ENCODE measurements at regions of chr10 and their contacts with region 1.

Region 1: DNA sequence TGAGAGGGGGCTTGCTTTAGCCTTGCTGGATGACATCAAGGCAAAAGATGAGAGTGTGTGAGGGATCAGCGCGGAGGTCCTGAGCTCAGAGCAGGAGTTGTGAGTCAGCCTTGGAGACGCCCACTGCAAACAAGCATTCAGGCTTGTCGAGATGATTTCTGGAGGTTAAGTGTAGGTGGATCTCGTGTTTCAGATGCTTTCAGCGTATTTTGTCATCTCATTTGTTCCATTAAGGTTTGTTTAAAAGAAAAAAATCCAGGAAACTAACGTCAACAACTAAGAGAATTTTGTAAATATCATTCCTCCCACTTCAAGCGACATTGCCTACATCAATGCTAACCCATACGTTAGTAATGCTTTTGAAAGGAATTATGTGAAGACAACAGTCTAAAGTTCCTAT is 715.4 kb upstream of the NRP1 start:
- DNase-seq: peak; percentile 61
- H3K4me3 Mint-ChIP-seq: no peak overlapping the region
- H3K27ac Mint-ChIP-seq: no peak overlapping the region
- H3K4me1 Mint-ChIP-seq: peaks cover 16% of the 10 kb centered on the region
- H3K27me3 Mint-ChIP-seq: peaks cover 17% of the 10 kb centered on the region

Region 2: GRCh38 chr10:33801748-33802147 is 248.1 kb before region 1 on chr10:
- CTCF ChIA-PET with region 1: no interaction called
- POLR2A ChIA-PET with region 1: no interaction called
- intact Hi-C with region 1: no loop called
- DNase-seq: no peak
- H3K4me3 Mint-ChIP-seq: no peak overlapping the region
- H3K27ac Mint-ChIP-seq: no peak overlapping the region
- H3K4me1 Mint-ChIP-seq: no peaks in the 10 kb centered on the region
- H3K27me3 Mint-ChIP-seq: no peaks in the 10 kb centered on the region

Region 3: DNA sequence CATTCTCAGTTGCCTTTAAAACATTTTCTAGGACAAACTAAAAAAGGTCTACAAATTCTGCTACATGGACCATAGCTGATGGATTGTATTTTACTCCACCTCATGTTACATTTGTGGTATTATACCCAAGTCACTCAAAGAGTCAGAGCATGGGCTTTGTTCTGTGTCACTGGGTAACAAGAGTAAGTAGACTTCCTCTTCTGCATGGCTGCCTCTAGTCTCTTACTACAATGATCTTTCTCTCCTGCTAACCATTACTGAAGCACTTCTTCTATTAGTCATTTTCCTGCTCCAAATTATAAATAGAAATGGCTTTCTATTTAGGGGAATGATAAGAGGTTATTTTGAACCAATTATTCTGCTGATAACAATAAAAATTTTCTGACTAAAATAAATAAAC is 12.0 kb after region 1 on chr10:
- CTCF ChIA-PET with region 1: no interaction called
- POLR2A ChIA-PET with region 1: no interaction called
- intact Hi-C with region 1: no loop called
- DNase-seq: no peak
- H3K4me3 Mint-ChIP-seq: no peak overlapping the region
- H3K27ac Mint-ChIP-seq: no peak overlapping the region
- H3K4me1 Mint-ChIP-seq: no peaks in the 10 kb centered on the region
- H3K27me3 Mint-ChIP-seq: no peaks in the 10 kb centered on the region

Region 4: DNA sequence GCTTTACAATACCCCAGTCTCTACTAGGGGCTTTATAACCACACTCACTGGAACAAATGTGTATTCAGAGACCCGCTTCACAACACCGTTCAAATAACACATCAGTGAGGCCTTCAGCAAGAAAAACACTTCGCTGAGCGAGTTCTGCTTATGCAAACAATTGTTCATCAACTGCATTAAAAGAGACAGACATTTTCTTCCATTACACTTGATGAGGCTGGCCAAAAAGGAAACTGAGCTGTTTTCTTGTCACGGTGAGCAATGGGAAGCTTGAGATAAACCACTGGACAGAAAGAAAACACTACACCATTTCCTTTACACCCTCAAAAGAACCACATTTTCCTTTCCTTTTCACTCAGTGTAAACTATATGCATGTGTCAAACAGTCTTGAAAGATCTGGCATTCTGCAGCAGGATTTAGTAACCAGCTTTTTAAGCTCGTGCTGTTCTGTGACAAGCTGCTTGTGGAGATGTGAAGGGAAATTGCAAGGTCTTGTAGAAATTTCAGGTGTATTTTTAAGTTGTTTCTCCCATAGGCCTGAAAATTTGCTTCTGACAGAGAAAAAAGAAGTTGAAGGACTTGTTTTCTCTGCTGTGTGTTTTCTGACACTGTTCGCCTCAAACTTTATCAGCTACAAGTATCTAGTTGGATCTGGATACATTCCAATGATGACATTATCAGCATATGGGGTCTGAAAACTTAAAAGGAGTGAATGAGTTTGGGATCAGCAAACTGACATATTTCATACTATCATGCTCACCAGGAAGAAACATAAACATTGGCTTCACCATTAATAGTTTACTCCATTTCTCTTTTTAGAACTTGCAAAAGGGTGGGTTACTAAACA is 72.1 kb after region 1 on chr10:
- CTCF ChIA-PET with region 1: no interaction called
- POLR2A ChIA-PET with region 1: no interaction called
- intact Hi-C with region 1: loop called (anchors 5 kb)
- DNase-seq: peak; percentile 18
- H3K4me3 Mint-ChIP-seq: no peak overlapping the region
- H3K27ac Mint-ChIP-seq: no peak overlapping the region
- H3K4me1 Mint-ChIP-seq: peaks cover 24% of the 10 kb centered on the region
- H3K27me3 Mint-ChIP-seq: peaks cover 3% of the 10 kb centered on the region